ENCODE measurements at regions of chr12 and their contacts with region 1.

Region 1: GRCh38 chr12:51090705-51091229 is 7.4 kb upstream of the CSRNP2 start:
- DNase-seq: no peak
- H3K4me3 ChIP-seq: no peak overlapping the region
- H3K27ac ChIP-seq: no peak overlapping the region
- H3K27me3 ChIP-seq: no peaks in the 10 kb centered on the region
- CTCF ChIP-seq: no peak

Region 2: DNA sequence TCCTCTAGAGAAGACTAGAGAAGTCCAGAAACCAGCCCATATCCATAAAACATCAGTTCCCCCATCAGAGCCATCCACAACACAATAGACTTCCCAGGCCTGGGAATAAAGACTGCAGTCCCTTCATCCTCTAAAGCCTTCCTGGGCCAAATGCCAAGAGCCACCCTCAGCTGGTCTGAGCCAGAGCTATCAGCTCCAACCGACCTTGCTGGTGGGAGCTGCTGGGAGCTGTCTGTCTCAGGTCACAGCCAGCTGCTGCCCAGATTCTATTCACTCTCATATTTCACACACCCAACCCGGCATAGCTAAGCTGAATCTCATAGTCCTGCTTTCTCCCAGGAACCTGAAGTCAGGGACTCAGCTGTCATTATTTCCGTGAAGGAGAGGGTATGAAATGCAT is 93.0 kb after region 1 on chr12:
- CTCF ChIA-PET with region 1: no interaction called
- POLR2A ChIA-PET with region 1: interaction called, 15 read pairs
- DNase-seq: no peak
- H3K4me3 ChIP-seq: no peak overlapping the region
- H3K27ac ChIP-seq: no peak overlapping the region
- H3K27me3 ChIP-seq: no peaks in the 10 kb centered on the region
- CTCF ChIP-seq: no peak

Measured in AG04450 (cell line).